Mammary epithelial cell (primary cell): ENCODE measurements at regions of chr11 and their contacts with region 1.

Region 1: GRCh38 chr11:66288671-66289547 is at the start of gene YIF1A:
- DNase-seq: peak; percentile 100
- H3K4me3 ChIP-seq: peak within 1 kb of the TSS; percentile 73 to 75 (median 73)
- H3K27ac ChIP-seq: peak within 1 kb of the TSS; percentile 73
- H3K4me1 ChIP-seq: peaks cover 19% of the 10 kb centered on the region
- H3K27me3 ChIP-seq: peaks cover 6% of the 10 kb centered on the region
- CTCF ChIP-seq: no peak
- total RNA-seq, gene YIF1A: 103 to 125 TPM

Region 2: GRCh38 chr11:66251809-66252208 is 37.1 kb before region 1 on chr11:
- CTCF ChIA-PET with region 1: no interaction called
- dilution Hi-C with region 1: loop called (anchors 5 kb)
- in situ Hi-C with region 1: no loop called
- intact Hi-C with region 1: no loop called
- DNase-seq: no peak
- H3K4me3 ChIP-seq: no peak overlapping the region
- H3K27ac ChIP-seq: no peak overlapping the region
- H3K4me1 ChIP-seq: peaks cover 3% of the 10 kb centered on the region
- H3K27me3 ChIP-seq: no peaks in the 10 kb centered on the region
- CTCF ChIP-seq: no peak

Region 3: GRCh38 chr11:66336234-66337102 is 47.6 kb after region 1 on chr11 and contains the start of gene RIN1:
- CTCF ChIA-PET with region 1: no interaction called
- dilution Hi-C with region 1: no loop called
- in situ Hi-C with region 1: no loop called
- intact Hi-C with region 1: loop called (anchors 2 kb)
- DNase-seq: peak; percentile 99
- H3K4me3 ChIP-seq: peak within 1 kb of the TSS; percentile 40 to 78 (median 70)
- H3K27ac ChIP-seq: peak within 1 kb of the TSS; percentile 87
- H3K4me1 ChIP-seq: peaks cover 52% of the 10 kb centered on the region
- H3K27me3 ChIP-seq: no peaks in the 10 kb centered on the region
- CTCF ChIP-seq: peak in 1 of 2 donors; percentile 19
- total RNA-seq, gene RIN1: 28.5 to 75.6 TPM

Region 4: DNA sequence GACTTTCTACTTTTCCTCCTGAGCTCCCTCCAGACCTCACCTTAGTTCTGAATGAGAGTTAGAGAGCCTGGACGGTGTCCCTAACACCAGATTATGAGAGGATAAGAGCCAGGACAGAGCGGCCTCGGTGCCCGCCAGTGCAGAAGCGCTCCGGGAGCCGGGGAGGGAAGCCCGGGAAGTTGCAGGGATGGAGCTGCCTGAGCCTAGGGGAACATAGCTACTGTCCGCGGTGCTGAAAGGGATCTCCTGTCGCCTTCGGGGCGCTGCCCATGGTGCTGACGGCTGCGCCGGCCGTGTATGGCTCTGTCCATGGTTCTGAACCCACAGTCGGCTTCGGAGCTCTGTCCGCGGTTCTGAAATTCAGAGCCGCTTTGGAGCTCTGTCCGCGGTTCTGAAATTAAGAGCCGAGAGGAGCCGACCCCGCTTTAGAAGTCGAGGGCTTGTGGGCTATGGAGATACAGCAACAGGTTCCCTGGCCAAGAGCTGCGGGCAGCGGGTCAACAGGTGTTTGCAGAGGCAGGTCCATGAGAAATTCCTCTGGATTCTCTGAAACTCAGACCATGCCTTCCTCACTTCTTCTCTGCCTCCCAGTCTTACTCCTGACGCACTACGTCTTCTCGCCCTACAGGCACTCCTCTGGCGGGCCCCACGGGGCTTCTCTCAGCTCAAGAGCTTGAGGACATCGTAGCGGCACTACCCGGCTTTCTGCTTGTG is 132.7 kb after region 1 on chr11:
- CTCF ChIA-PET with region 1: no interaction called
- dilution Hi-C with region 1: no loop called
- in situ Hi-C with region 1: no loop called
- intact Hi-C with region 1: loop called (anchors 1 kb)
- DNase-seq: peak; percentile 71
- H3K4me3 ChIP-seq: no peak overlapping the region
- H3K27ac ChIP-seq: no peak overlapping the region
- H3K4me1 ChIP-seq: no peaks in the 10 kb centered on the region
- H3K27me3 ChIP-seq: no peaks in the 10 kb centered on the region
- CTCF ChIP-seq: no peak